A549 (cell line): ENCODE measurements at regions of chr16 and their contacts with region 1.

Region 1: GRCh38 chr16:78122774-78123315 is 23.4 kb downstream of the WWOX start:
- DNase-seq: peak; percentile 32 to 46
- ATAC-seq: peak; percentile 81 to 88; a peak in 5 of 6 replicates
- H3K4me3 ChIP-seq: no peak overlapping the region
- H3K27ac ChIP-seq: no peak overlapping the region
- H3K4me1 ChIP-seq: no peaks in the 10 kb centered on the region
- CTCF ChIP-seq: peak; percentile 68
- EP300 ChIP-seq: no peak
- POLR2A ChIP-seq: no peak
- RAD21 ChIP-seq: peak; percentile 71 to 82

Region 2: DNA sequence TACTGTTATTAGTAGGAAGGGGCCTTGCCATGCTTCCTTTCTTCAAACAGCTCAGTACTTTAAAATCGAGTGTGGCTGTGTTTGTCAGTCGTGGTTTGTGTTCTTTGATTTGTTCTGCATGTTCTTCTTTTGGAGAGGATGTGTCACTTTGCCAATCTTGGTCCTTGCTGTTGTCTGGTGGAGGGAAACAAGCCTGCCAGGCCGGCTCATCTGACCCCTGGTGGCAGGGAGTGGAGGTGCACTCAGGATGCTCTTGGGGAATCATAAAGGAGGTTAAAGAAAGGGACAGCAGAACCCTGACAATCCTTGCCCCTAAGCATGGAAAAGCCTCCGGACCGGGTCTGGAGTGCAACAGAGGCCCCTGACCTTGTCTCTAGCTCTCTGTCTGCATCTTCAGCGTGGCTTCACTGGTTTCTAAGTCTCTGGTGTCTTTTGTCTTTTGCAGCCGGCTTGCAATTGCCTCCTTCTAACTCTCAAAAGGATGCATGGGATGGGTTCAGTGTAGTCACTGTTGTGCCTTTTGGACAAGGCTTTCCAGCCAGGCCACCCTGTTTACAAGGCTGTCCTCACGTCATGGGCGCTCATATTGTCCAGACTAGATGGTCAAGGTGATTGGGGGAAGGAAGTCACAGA is 112.4 kb after region 1 on chr16:
- CTCF ChIA-PET with region 1: interaction called, 15 read pairs
- POLR2A ChIA-PET with region 1: no interaction called
- DNase-seq: peak; percentile 68 to 71
- ATAC-seq: peak; percentile 95 to 97; a peak in 5 of 6 replicates
- H3K4me3 ChIP-seq: no peak overlapping the region
- H3K27ac ChIP-seq: no peak overlapping the region
- H3K4me1 ChIP-seq: peaks cover 8% of the 10 kb centered on the region; the same call in 2 of the 3 replicates
- CTCF ChIP-seq: peak; percentile 72
- EP300 ChIP-seq: no peak
- POLR2A ChIP-seq: no peak
- RAD21 ChIP-seq: peak; percentile 56 to 57